CD4-positive, alpha-beta T cell (primary cell): ENCODE measurements at regions of chr1 and their contacts with region 1.

Region 1: GRCh38 chr1:213211201-213211600 is 160.2 kb downstream of the RPS6KC1 start:
- DNase-seq: no peak
- ATAC-seq: no peak
- H3K4me3 ChIP-seq: no peak overlapping the region
- H3K4me3 Mint-ChIP-seq: no peak overlapping the region
- H3K27ac ChIP-seq: no peak overlapping the region
- H3K27ac Mint-ChIP-seq: no peak overlapping the region
- H3K4me1 ChIP-seq: no peaks in the 10 kb centered on the region
- H3K4me1 Mint-ChIP-seq: no peaks in the 10 kb centered on the region
- H3K27me3 ChIP-seq: no peaks in the 10 kb centered on the region
- H3K27me3 Mint-ChIP-seq: no peaks in the 10 kb centered on the region
- CTCF ChIP-seq: no peak

Region 2: GRCh38 chr1:213159376-213159775 is 51.8 kb before region 1 on chr1:
- CTCF ChIA-PET with region 1: no interaction called
- POLR2A ChIA-PET with region 1: no interaction called
- intact Hi-C with region 1: loop called in 1 of 2 experiments (anchors 2 kb)
- DNase-seq: no peak
- ATAC-seq: no peak
- H3K4me3 ChIP-seq: no peak overlapping the region
- H3K4me3 Mint-ChIP-seq: no peak overlapping the region
- H3K27ac ChIP-seq: no peak overlapping the region
- H3K27ac Mint-ChIP-seq: no peak overlapping the region
- H3K4me1 ChIP-seq: no peaks in the 10 kb centered on the region
- H3K4me1 Mint-ChIP-seq: no peaks in the 10 kb centered on the region
- H3K27me3 ChIP-seq: no peaks in the 10 kb centered on the region
- H3K27me3 Mint-ChIP-seq: no peaks in the 10 kb centered on the region
- CTCF ChIP-seq: no peak

Region 3: GRCh38 chr1:213303286-213303685 is 92.1 kb after region 1 on chr1:
- CTCF ChIA-PET with region 1: no interaction called
- POLR2A ChIA-PET with region 1: no interaction called
- intact Hi-C with region 1: no loop called
- DNase-seq: no peak
- ATAC-seq: no peak
- H3K4me3 ChIP-seq: no peak overlapping the region
- H3K4me3 Mint-ChIP-seq: no peak overlapping the region
- H3K27ac ChIP-seq: no peak overlapping the region
- H3K27ac Mint-ChIP-seq: no peak overlapping the region
- H3K4me1 ChIP-seq: no peaks in the 10 kb centered on the region
- H3K4me1 Mint-ChIP-seq: no peaks in the 10 kb centered on the region
- H3K27me3 ChIP-seq: no peaks in the 10 kb centered on the region
- H3K27me3 Mint-ChIP-seq: no peaks in the 10 kb centered on the region
- CTCF ChIP-seq: no peak

Region 4: GRCh38 chr1:213389061-213389581 is 177.9 kb after region 1 on chr1:
- CTCF ChIA-PET with region 1: no interaction called
- POLR2A ChIA-PET with region 1: no interaction called
- intact Hi-C with region 1: no loop called
- DNase-seq: no peak
- ATAC-seq: no peak
- H3K4me3 ChIP-seq: no peak overlapping the region
- H3K4me3 Mint-ChIP-seq: no peak overlapping the region
- H3K27ac ChIP-seq: no peak overlapping the region
- H3K27ac Mint-ChIP-seq: no peak overlapping the region
- H3K4me1 ChIP-seq: no peaks in the 10 kb centered on the region
- H3K4me1 Mint-ChIP-seq: no peaks in the 10 kb centered on the region
- H3K27me3 ChIP-seq: no peaks in the 10 kb centered on the region
- H3K27me3 Mint-ChIP-seq: no peaks in the 10 kb centered on the region
- CTCF ChIP-seq: no peak